MCF 10A (cell line): ENCODE measurements at regions of chr18 and their contacts with region 1.

Region 1: GRCh38 chr18:9516437-9517064 is 41.2 kb downstream of the RALBP1 start:
- DNase-seq: peak; percentile 52
- H3K4me3 Mint-ChIP-seq: no peak overlapping the region
- H3K27ac Mint-ChIP-seq: no peak overlapping the region
- H3K4me1 Mint-ChIP-seq: peaks cover 8% of the 10 kb centered on the region
- H3K27me3 Mint-ChIP-seq: no peaks in the 10 kb centered on the region
- CTCF ChIP-seq: peak; percentile 88

Region 2: DNA sequence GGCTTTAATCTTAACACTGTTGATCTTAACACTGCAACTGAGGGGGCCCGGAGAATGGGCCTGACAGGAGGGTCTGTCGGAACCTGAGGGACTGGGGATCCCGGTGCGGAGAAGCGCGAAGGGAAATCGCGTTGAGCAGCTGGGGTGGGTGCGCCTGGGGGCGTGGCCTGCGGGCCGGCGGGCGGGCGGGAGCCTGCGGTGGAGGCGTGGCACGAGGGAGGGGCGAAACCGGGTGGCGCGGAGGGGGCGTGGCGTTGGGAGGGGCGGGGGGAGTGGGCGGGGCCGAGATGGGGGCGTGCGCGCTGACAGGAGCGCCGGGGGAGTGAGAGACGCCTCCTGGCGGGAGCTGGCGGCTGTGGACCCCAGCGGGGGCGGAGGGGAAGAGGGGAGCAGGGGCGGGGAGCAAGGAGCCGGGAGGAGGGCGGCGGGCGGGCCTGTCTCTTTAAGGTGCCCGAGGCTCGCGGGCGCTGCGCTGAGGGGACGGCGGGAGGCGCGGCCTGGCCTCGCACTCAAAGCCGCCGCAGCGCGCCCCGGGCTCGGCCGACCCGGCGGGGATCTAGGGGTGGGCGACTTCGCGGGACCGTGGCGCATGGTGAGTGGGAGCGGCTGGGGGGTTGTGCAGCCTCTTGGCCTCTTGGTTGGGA is 182.1 kb before region 1 on chr18 and contains the start of gene TWSG1:
- CTCF ChIA-PET with region 1: interaction called, 4 read pairs
- POLR2A ChIA-PET with region 1: interaction called, 3 read pairs
- intact Hi-C with region 1: loop called (anchors 1 kb)
- DNase-seq: peak; percentile 93
- H3K4me3 Mint-ChIP-seq: peak within 1 kb of the TSS; percentile 81
- H3K27ac Mint-ChIP-seq: peak within 1 kb of the TSS; percentile 63
- H3K4me1 Mint-ChIP-seq: peaks cover 8% of the 10 kb centered on the region
- H3K27me3 Mint-ChIP-seq: no peaks in the 10 kb centered on the region
- CTCF ChIP-seq: peak; percentile 40
- total RNA-seq, gene TWSG1: 26.0 and 31.7 TPM in 2 replicates

Region 3: DNA sequence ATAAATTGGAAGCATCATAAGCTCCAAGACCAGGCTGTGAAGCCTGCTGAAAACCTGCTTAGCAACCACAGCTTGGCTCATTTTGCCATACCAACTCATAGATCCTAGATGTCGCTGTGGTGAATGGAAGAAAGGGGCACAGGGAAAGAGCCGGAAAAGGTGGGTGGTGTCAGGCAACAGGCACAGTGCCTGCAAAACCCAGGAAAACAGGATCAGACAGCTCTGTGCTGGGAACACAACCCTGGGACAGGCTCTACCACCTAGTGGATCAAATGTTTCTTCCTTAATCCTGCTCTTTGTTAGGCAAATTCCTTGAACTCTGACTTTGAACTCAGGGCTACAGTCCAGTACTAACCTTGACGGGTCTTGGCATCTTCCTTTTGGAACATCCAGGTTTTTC is 150.4 kb before region 1 on chr18:
- CTCF ChIA-PET with region 1: interaction called, 9 read pairs
- POLR2A ChIA-PET with region 1: no interaction called
- intact Hi-C with region 1: loop called (anchors 1 kb)
- DNase-seq: peak; percentile 70
- H3K4me3 Mint-ChIP-seq: no peak overlapping the region
- H3K27ac Mint-ChIP-seq: peak overlapping the region; percentile 13
- H3K4me1 Mint-ChIP-seq: peaks cover 28% of the 10 kb centered on the region
- H3K27me3 Mint-ChIP-seq: no peaks in the 10 kb centered on the region
- CTCF ChIP-seq: peak; percentile 36

Region 4: DNA sequence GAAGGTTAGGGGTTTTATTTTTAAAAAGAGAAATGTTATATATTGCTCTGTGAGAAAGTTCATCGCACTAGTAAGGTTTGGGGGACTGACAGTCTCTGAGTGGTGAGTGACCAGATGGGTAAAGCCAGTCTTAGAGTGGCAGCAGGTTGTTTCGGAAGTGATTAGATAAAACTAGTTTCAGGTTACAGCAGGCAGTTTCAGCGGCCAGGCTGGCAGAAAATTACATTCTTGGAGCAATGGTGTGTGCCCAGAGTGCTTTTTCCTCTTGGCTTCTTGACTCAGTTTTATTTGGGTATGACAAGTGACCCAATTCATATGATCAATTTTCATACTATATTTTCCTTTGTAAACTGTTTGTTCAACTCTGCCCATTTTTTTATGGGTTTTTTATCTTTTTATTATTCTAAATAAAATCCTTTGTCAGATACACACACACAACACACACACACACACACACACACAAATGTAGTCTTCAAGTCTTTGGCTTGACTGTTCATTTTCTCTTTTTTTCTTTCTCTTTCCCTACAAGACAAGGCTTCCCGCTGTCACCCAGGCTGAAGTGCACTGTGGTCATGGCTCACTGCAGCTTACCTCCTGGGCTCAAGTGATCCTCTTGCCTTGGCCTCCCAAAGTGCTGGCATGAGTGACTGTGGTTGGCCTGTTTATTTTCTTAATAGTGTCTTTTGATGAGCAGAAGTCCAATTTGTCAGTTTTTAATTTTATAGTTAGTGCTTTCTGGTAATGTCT is 10.3 kb before region 1 on chr18:
- CTCF ChIA-PET with region 1: interaction called, 11 read pairs
- POLR2A ChIA-PET with region 1: no interaction called
- intact Hi-C with region 1: no loop called
- DNase-seq: peak; percentile 49
- H3K4me3 Mint-ChIP-seq: no peak overlapping the region
- H3K27ac Mint-ChIP-seq: no peak overlapping the region
- H3K4me1 Mint-ChIP-seq: peaks cover 27% of the 10 kb centered on the region
- H3K27me3 Mint-ChIP-seq: no peaks in the 10 kb centered on the region
- CTCF ChIP-seq: no peak